CD4-positive, alpha-beta memory T cell (primary cell): ENCODE measurements at regions of chr16 and their contacts with region 1.

Region 1: DNA sequence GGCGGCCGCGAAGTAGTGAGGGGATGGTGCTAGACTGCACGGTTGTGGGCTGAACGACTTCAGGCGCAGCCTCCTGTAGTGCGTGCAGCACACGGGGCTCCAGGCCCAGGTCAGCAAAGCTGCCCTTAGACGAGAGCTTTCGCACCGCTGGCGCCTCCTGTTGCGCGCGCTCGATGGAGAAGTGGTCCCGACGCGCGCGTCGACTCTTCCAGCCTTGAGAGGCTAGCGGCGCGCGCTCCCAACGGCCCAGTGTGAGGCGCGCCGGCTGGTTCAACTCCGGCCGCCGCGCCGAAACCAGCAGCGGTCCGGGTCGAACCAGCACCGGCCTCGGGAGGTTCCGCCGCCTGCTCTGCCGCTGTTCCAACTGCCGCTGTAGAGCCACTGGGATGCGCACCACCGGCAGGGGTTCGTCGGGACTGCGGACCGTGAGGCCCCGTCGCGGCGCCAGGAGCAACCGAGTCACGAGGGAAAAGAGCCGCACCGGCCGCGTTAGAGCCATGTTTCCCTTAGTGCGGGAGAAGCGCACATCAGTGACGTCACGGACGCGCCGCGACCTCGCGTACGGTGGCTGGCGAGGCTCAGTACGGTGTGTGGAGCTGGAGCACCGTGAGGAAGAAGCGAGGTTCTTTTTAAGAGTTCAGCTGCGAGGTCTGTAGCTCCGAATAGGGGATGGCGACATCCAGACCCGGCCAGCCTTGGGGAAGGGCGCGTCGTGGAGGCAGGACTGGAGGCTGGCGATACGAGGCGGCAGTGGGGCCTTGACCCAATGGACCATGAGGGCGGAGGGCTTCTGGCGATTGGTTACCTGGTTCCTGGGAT is at the starts of genes DDX28 and DUS2:
- DNase-seq: peak; percentile 92 to 95 (median 92)
- H3K4me3 ChIP-seq: peak within 1 kb of the TSS; percentile 57 to 87
- H3K4me3 Mint-ChIP-seq: peak within 1 kb of the TSS; percentile 93 to 100 (median 97)
- H3K27ac ChIP-seq: peak within 1 kb of the TSS; percentile 84
- H3K27ac Mint-ChIP-seq: peak within 1 kb of the TSS; percentile 91 to 100 (median 99)
- H3K4me1 ChIP-seq: peaks cover 30% of the 10 kb centered on the region
- H3K4me1 Mint-ChIP-seq: peaks cover 10 to 37% (median 28%) of the 10 kb centered on the region in 4 donors
- H3K27me3 ChIP-seq: no peaks in the 10 kb centered on the region
- H3K27me3 Mint-ChIP-seq: peaks cover 1 to 2% of the 10 kb centered on the region in 2 donors
- total RNA-seq, gene DDX28: 16.1 to 17.0 TPM
- total RNA-seq, gene DUS2: 13.8 to 14.6 TPM

Region 2: DNA sequence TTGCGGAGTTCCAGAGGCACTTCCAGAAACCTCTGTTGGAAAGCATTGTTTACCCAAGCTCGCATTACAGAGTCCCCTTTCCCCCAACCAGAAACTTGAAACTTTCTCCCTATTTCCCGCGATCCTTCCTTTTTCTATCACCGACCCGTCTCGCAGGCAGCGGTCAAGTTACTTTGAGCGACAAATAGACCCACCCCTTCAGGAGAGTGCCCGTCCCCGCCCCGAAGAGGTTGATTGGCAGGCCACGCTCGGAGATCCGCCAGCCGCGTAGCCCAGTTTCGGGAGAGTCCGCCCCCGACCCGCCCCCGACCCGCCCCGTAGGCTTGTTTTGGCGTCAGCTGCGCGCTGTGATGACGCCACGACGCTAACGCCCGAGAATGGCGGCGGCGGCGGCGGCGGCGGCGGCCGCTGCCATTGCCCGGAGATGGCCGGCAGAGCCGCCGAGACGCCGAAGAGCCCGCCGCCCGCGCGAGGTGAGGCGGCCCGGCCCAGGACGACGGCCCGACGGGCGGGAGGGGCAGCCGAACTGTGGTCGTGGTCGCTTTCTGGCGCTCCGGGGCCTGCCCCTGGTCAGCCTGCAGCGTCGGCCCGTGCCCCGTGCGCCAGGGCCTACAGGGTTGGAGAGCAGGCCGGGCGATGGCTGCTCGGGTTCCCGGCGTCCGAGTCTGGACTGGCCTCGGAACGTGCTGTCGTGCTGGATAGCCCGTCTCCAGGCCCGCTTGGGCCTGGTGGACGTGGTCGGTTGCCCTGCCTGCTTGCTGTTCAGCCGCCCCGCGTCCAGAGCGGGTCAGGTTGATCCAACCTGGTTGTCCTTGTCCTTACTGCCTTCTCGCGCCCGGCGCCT is 129.8 kb before region 1 on chr16 and contains the start of gene PSKH1:
- CTCF ChIA-PET with region 1: no interaction called
- POLR2A ChIA-PET with region 1: interaction called, 3 read pairs
- intact Hi-C with region 1: loop called (anchors 1 kb)
- DNase-seq: peak; percentile 86 to 95 (median 87)
- H3K4me3 ChIP-seq: peak within 1 kb of the TSS; percentile 76 to 90
- H3K4me3 Mint-ChIP-seq: peak within 1 kb of the TSS; percentile 89 to 98 (median 96)
- H3K27ac ChIP-seq: peak within 1 kb of the TSS; percentile 95
- H3K27ac Mint-ChIP-seq: peak within 1 kb of the TSS; percentile 96 to 98 (median 97)
- H3K4me1 ChIP-seq: peaks cover 20% of the 10 kb centered on the region
- H3K4me1 Mint-ChIP-seq: peaks cover 12 to 48% (median 39%) of the 10 kb centered on the region in 4 donors
- H3K27me3 ChIP-seq: no peaks in the 10 kb centered on the region
- H3K27me3 Mint-ChIP-seq: no peaks in the 10 kb centered on the region
- total RNA-seq, gene PSKH1: 22.3 to 25.1 TPM

Region 3: DNA sequence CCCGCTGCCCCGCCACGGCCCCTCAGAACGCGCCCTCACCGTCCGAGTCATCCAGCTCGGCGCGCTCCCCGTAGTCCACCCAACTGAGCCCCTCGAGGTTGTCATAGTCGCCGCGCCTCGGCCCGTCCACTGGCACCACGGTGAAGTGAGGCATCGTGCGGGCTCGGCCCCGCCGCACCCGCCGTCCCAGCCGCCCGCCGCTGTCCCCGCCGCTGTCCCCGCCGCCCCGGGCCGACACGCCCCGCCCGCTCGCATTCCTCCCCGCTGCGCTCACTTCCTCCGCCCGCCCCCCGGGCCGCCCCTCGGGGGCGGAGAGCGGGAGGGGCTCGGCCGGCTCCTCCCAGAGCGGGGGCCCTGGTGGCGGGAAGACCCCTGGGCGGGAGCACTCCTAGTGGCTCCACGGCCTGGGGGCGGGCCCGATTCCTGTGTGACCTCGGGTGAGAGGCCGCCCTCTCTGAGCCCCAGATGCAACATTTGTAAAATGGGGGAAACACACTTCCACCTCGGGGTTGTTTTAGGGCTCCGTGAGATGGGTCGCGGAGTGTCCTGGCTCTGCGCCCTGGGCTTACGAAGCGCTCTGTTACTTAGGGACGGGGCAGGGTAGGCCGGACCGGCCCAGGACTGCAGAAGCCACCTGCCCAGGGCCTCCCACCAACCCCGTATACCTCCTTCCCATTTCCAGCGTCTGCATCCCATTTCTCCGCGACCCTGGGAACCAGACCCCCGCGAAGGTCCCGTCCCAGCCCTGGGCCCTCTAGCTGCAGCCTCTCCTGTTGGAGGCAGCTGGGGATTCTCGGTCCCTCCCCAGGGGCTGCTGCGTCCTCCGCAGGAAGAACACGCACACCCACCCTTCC is 54.3 kb before region 1 on chr16 and contains the start of gene SLC12A4:
- CTCF ChIA-PET with region 1: no interaction called
- POLR2A ChIA-PET with region 1: interaction called, 3 read pairs
- intact Hi-C with region 1: loop called (anchors 1 kb)
- DNase-seq: peak; percentile 80 to 90 (median 83)
- H3K4me3 ChIP-seq: peak within 1 kb of the TSS; percentile 84 to 91
- H3K4me3 Mint-ChIP-seq: peak within 1 kb of the TSS; percentile 88 to 99 (median 97)
- H3K27ac ChIP-seq: peak within 1 kb of the TSS; percentile 63
- H3K27ac Mint-ChIP-seq: peak within 1 kb of the TSS; percentile 83 to 98 (median 95)
- H3K4me1 ChIP-seq: peaks cover 17% of the 10 kb centered on the region
- H3K4me1 Mint-ChIP-seq: peaks cover 12 to 39% (median 19%) of the 10 kb centered on the region in 4 donors
- H3K27me3 ChIP-seq: no peaks in the 10 kb centered on the region
- H3K27me3 Mint-ChIP-seq: no peaks in the 10 kb centered on the region
- total RNA-seq, gene SLC12A4: 33.2 to 33.5 TPM

Region 4: DNA sequence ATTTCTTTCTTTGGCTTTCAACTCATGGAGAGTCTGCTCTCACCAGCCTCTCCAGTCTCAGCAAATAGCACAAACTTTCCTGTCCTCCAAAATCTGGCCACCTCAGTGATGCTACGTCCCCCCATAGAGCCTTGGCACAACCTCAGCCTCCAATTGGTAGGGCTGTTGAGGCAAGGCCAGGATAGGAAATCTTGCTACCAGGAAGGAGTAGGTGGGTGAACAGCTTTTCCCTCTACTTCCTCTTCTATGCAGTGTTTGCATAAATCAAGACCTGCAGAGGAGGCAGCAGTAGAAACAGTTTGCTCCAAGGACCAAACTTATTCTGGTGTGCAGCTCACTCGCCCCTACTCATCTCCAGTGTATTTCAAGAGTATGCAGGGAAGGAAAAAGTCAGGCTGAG is 22.9 kb before region 1 on chr16:
- CTCF ChIA-PET with region 1: interaction called, 45 read pairs
- POLR2A ChIA-PET with region 1: interaction called, 95 read pairs
- intact Hi-C with region 1: no loop called
- DNase-seq: no peak
- H3K4me3 ChIP-seq: peak overlapping the region in 1 of 2 donors; percentile 41
- H3K4me3 Mint-ChIP-seq: peak overlapping the region; percentile 84 to 96 (median 88)
- H3K27ac ChIP-seq: peak overlapping the region; percentile 60
- H3K27ac Mint-ChIP-seq: peak overlapping the region; percentile 84 to 99 (median 95)
- H3K4me1 ChIP-seq: peaks cover 80% of the 10 kb centered on the region
- H3K4me1 Mint-ChIP-seq: peaks cover 36 to 78% (median 54%) of the 10 kb centered on the region in 4 donors
- H3K27me3 ChIP-seq: no peaks in the 10 kb centered on the region
- H3K27me3 Mint-ChIP-seq: no peaks in the 10 kb centered on the region

Region 5: GRCh38 chr16:68005786-68006286 is 17.1 kb before region 1 on chr16:
- CTCF ChIA-PET with region 1: interaction called, 45 read pairs
- POLR2A ChIA-PET with region 1: interaction called, 95 read pairs
- intact Hi-C with region 1: loop called (anchors 2 kb)
- DNase-seq: peak; percentile 61 to 77 (median 67)
- H3K4me3 ChIP-seq: no peak overlapping the region
- H3K4me3 Mint-ChIP-seq: peak overlapping the region in 7 of 8 donors; percentile 46 to 76 (median 60)
- H3K27ac ChIP-seq: peak overlapping the region; percentile 29
- H3K27ac Mint-ChIP-seq: peak overlapping the region; percentile 81 to 97 (median 95)
- H3K4me1 ChIP-seq: peaks cover 56% of the 10 kb centered on the region
- H3K4me1 Mint-ChIP-seq: peaks cover 22 to 53% (median 37%) of the 10 kb centered on the region in 4 donors
- H3K27me3 ChIP-seq: no peaks in the 10 kb centered on the region
- H3K27me3 Mint-ChIP-seq: no peaks in the 10 kb centered on the region